MCF 10A (cell line): ENCODE measurements at regions of chr2 and their contacts with region 1.

Region 1: GRCh38 chr2:151437630-151438029 is 27.9 kb downstream of the RIF1 start:
- DNase-seq: peak; percentile 32
- H3K4me3 Mint-ChIP-seq: no peak overlapping the region
- H3K27ac Mint-ChIP-seq: peak overlapping the region; percentile 64
- H3K4me1 Mint-ChIP-seq: no peaks in the 10 kb centered on the region
- H3K27me3 Mint-ChIP-seq: no peaks in the 10 kb centered on the region
- CTCF ChIP-seq: peak; percentile 47

Region 2: GRCh38 chr2:151422917-151423439 is 14.7 kb before region 1 on chr2:
- CTCF ChIA-PET with region 1: interaction called, 37 read pairs
- POLR2A ChIA-PET with region 1: interaction called, 3 read pairs
- intact Hi-C with region 1: no loop called
- DNase-seq: no peak
- H3K4me3 Mint-ChIP-seq: no peak overlapping the region
- H3K27ac Mint-ChIP-seq: no peak overlapping the region
- H3K4me1 Mint-ChIP-seq: peaks cover 6% of the 10 kb centered on the region
- H3K27me3 Mint-ChIP-seq: no peaks in the 10 kb centered on the region
- CTCF ChIP-seq: no peak

Region 3: DNA sequence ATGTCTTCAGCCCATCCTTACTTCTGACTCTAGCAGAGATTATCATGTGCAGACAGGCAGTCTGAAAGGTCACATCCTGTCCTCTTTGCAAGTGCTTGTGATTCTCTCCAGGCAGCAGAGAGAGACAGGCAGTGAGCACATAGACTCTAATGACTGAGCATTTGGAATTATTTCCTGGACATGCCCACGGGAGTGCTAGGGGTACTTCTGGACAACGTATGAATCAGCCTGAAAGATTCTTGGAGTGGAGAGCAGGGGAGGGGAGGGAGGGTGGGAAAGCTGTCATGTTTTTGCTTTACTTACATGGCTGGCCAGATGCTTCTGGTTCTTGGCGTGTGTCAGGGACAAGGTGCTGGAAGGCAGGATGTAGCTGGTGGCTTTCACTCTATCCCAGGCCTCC is 122.7 kb after region 1 on chr2:
- CTCF ChIA-PET with region 1: no interaction called
- POLR2A ChIA-PET with region 1: no interaction called
- intact Hi-C with region 1: no loop called
- DNase-seq: peak; percentile 4
- H3K4me3 Mint-ChIP-seq: no peak overlapping the region
- H3K27ac Mint-ChIP-seq: no peak overlapping the region
- H3K4me1 Mint-ChIP-seq: no peaks in the 10 kb centered on the region
- H3K27me3 Mint-ChIP-seq: no peaks in the 10 kb centered on the region
- CTCF ChIP-seq: no peak